AG04450 (cell line): ENCODE measurements at regions of chr14 and their contacts with region 1.

Region 1: GRCh38 chr14:90839889-90840266 is 23.6 kb upstream of the TTC7B start:
- DNase-seq: no peak
- H3K4me3 ChIP-seq: no peak overlapping the region
- H3K27ac ChIP-seq: no peak overlapping the region
- H3K27me3 ChIP-seq: no peaks in the 10 kb centered on the region
- CTCF ChIP-seq: no peak

Region 2: GRCh38 chr14:90865484-90865883 is 25.6 kb after region 1 on chr14:
- CTCF ChIA-PET with region 1: interaction called, 11 read pairs
- POLR2A ChIA-PET with region 1: no interaction called
- DNase-seq: no peak
- H3K4me3 ChIP-seq: no peak overlapping the region
- H3K27ac ChIP-seq: no peak overlapping the region
- H3K27me3 ChIP-seq: no peaks in the 10 kb centered on the region
- CTCF ChIP-seq: no peak